Gastrocnemius medialis (tissue), 4 donors: ENCODE measurements at regions of chr18 and their contacts with region 1.

Region 1: DNA sequence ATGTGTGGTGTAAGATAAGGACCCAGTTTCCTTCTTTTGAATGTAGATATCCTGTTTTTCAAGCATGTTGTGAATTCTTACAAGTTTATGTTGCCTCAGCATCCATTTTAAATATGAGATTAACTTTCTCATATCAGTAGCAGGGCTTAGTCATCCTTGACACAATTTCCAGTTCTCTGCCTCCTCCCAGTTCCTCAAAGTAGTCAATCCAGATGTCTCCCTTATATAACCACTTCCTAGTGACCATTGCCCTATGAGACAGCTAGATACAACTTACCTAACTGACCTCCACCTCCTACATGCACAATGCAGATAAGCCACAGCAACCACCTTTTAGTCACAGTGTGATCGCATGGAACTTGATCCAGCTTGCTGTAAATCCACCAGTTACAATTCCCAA is 269.2 kb upstream of the ZNF521 start:
- DNase-seq: no peak
- ATAC-seq: no peak
- H3K4me3 ChIP-seq: no peak overlapping the region
- H3K27ac ChIP-seq: no peak overlapping the region
- H3K4me1 ChIP-seq: no peaks in the 10 kb centered on the region
- H3K27me3 ChIP-seq: no peaks in the 10 kb centered on the region
- CTCF ChIP-seq: no peak
- POLR2A ChIP-seq: no peak

Region 2: GRCh38 chr18:25399554-25399953 is 221.6 kb before region 1 on chr18:
- in situ Hi-C with region 1: no loop called
- intact Hi-C with region 1: no loop called
- DNase-seq: no peak
- ATAC-seq: no peak
- H3K4me3 ChIP-seq: no peak overlapping the region
- H3K27ac ChIP-seq: no peak overlapping the region
- H3K4me1 ChIP-seq: no peaks in the 10 kb centered on the region
- H3K27me3 ChIP-seq: no peaks in the 10 kb centered on the region
- CTCF ChIP-seq: no peak
- POLR2A ChIP-seq: no peak

Region 3: GRCh38 chr18:25669741-25670140 is 48.6 kb after region 1 on chr18:
- in situ Hi-C with region 1: no loop called
- intact Hi-C with region 1: loop called (anchors 2 kb)
- DNase-seq: no peak
- ATAC-seq: no peak
- H3K4me3 ChIP-seq: no peak overlapping the region
- H3K27ac ChIP-seq: no peak overlapping the region
- H3K4me1 ChIP-seq: no peaks in the 10 kb centered on the region
- H3K27me3 ChIP-seq: no peaks in the 10 kb centered on the region
- CTCF ChIP-seq: no peak
- POLR2A ChIP-seq: no peak